ENCODE measurements at regions of chr10 and their contacts with region 1.

Region 1: GRCh38 chr10:28302638-28303488 is at the start of gene MPP7:
- DNase-seq: peak; percentile 96 to 97
- ATAC-seq: peak; percentile 100
- H3K4me3 ChIP-seq: peak within 1 kb of the TSS; percentile 79 to 89
- H3K27ac ChIP-seq: peak within 1 kb of the TSS; percentile 91 to 95
- H3K4me1 ChIP-seq: peaks cover 0 to 3% of the 10 kb centered on the region in 2 donors
- H3K27me3 ChIP-seq: no peaks in the 10 kb centered on the region
- total RNA-seq, gene MPP7: 38.0 to 95.3 TPM

Region 2: DNA sequence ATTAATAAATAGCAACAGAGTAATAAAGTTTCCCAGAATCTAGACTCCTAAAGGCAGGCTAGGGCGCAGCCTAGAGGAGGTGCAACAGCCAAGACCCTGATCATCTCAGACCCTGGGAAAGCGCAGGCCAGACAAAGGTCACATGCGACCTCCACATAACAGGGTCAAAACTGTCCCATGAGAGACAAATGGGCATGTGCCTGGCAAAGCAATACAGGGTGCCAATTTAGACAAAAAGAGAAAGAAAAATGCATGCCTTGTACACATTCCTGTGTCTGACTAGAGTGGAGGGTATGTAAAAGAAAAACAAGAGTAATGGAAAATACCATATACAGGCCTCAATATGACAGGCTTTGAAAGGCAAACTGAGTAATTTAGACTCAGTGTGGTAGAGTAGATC is 22.2 kb before region 1 on chr10:
- intact Hi-C with region 1: loop called in 1 of 2 experiments (anchors 1 kb)
- DNase-seq: peak; percentile 66 to 78
- ATAC-seq: peak; percentile 86
- H3K4me3 ChIP-seq: no peak overlapping the region
- H3K27ac ChIP-seq: peak overlapping the region; percentile 35 to 98
- H3K4me1 ChIP-seq: peaks cover 10 to 11% of the 10 kb centered on the region in 2 donors
- H3K27me3 ChIP-seq: no peaks in the 10 kb centered on the region

Region 3: DNA sequence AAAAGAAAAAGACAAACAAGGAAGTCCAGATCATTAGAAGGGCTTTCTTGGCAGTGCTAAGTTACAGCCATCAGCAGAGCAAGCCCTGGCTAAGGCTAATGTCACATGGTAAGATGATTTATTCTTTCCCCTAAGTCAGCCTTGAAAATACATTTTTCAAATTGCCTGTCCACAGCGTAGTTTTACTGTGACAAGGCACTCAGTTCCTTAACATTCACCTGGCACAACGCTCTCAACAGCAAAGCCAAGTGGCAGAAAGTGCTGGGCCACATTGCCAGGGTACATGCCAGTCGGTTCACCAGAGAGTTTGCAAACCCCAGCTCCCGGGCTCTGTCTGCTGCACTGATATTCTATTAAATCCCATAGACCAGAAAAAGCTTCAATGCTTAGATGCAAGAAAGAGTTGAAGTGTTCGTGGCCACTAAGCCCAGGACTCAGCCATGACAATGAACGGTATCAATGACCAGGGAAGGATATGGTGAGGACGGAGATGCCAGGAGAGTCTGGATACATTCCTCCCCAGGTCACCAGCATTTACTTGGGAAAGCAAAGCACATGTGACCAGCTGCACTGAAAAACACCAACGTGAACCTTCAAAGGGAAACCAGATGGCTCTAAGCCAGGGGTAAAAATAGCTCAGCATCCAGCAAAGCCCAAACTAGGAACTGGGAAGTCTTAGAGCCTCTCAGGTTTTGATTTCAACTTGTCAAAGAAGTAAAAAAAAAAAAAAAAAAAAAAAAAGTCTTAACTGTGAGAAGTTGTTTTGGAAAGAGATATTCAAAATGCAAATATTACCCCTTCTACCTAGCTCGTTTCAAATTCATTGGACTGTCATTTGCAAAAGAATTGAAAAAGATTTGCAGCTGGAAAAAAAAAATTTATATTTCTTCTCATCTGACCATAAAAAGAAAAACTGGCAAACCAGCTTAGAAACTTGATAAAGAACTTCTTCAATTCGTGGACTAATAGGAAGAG is 23.9 kb after region 1 on chr10:
- intact Hi-C with region 1: loop called in 1 of 2 experiments (anchors 2 kb)
- DNase-seq: peak; percentile 58 to 76
- ATAC-seq: peak; percentile 88
- H3K4me3 ChIP-seq: no peak overlapping the region
- H3K27ac ChIP-seq: peak overlapping the region; percentile 62 to 97
- H3K4me1 ChIP-seq: peaks cover 0 to 5% of the 10 kb centered on the region in 2 donors
- H3K27me3 ChIP-seq: no peaks in the 10 kb centered on the region

Measured in aorta (tissue), 5 donors.